Activated CD4-positive, alpha-beta memory T cell treated with anti-CD3 and anti-CD28 coated beads, Interleukin-2, amount 10 ng/mL, durations not matched to agents 7 days and 5 days (primary cell): ENCODE measurements at regions of chr12 and their contacts with region 1.

Region 1: GRCh38 chr12:113358381-113359132 is at the start of gene PLBD2:
- DNase-seq: peak; percentile 94
- H3K4me3 Mint-ChIP-seq: peak within 1 kb of the TSS; percentile 79
- H3K27ac Mint-ChIP-seq: peak within 1 kb of the TSS; percentile 61
- H3K4me1 Mint-ChIP-seq: peaks cover 10% of the 10 kb centered on the region
- H3K27me3 Mint-ChIP-seq: no peaks in the 10 kb centered on the region
- total RNA-seq, gene PLBD2: 9.9 to 10.9 TPM

Region 2: GRCh38 chr12:113334786-113335540 is 23.6 kb before region 1 on chr12 and contains the start of gene SLC8B1:
- CTCF ChIA-PET with region 1: interaction called, 13 read pairs
- POLR2A ChIA-PET with region 1: interaction called, 4 read pairs
- DNase-seq: peak; percentile 90
- H3K4me3 Mint-ChIP-seq: peak within 1 kb of the TSS; percentile 86
- H3K27ac Mint-ChIP-seq: peak within 1 kb of the TSS; percentile 17
- H3K4me1 Mint-ChIP-seq: peaks cover 17% of the 10 kb centered on the region
- H3K27me3 Mint-ChIP-seq: no peaks in the 10 kb centered on the region
- total RNA-seq, gene SLC8B1: 20.2 to 20.8 TPM

Region 3: GRCh38 chr12:113413488-113413939 is 55.0 kb after region 1 on chr12:
- CTCF ChIA-PET with region 1: no interaction called
- POLR2A ChIA-PET with region 1: no interaction called
- DNase-seq: no peak
- H3K4me3 Mint-ChIP-seq: no peak overlapping the region
- H3K27ac Mint-ChIP-seq: no peak overlapping the region
- H3K4me1 Mint-ChIP-seq: no peaks in the 10 kb centered on the region
- H3K27me3 Mint-ChIP-seq: peaks cover 10% of the 10 kb centered on the region